ENCODE measurements at regions of chr2 and their contacts with region 1.

Region 1: DNA sequence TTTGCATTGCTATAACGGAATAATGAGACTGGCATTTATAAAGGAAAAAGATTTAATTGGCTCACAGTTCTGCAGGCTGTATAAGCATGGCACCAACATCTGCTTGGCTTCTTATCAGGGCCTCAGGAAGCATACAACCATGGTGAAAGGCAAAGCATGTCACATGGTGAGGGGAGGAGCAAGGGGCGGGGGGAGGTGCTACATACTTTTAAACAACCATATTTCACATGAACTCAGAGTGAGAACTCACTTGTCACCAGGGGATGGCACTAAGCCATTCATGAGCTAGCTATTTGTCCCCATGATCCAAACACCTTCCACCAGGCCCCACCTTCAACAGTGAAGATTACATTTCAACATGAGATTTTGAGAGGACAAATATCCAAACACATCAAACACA is 188.7 kb downstream of the MBD5 start:
- DNase-seq: no peak
- H3K4me3 ChIP-seq: no peak overlapping the region
- H3K27me3 ChIP-seq: no peaks in the 10 kb centered on the region
- CTCF ChIP-seq: no peak

Region 2: DNA sequence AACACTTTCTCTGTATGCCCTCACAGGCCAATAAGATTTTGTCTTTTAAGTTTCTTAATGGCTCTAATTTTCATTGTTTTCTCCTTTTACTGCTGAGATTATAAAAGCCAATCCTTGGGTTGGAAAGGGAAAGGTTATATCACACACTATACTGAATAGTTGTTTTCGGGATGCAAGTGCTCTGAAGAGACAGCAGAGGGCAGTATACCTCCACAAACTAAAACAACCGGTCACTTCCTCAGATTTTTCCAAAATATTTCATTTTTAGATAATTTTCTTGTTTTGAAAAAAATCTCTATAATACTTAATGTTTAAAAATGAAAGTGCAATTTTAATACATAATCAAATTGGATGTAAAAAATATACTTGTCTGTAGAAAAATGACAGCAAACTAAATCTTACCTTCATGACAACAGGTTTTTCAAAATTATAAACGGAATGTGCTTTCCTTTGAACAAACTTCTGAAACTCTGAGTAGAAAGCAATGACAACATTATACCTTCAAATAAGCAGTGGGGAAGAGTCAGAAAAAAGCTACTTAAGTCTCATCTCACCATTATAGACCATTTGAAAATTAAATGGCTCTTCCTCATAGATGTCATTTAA is 271.8 kb before region 1 on chr2:
- CTCF ChIA-PET with region 1: no interaction called
- POLR2A ChIA-PET with region 1: no interaction called
- DNase-seq: no peak
- H3K4me3 ChIP-seq: no peak overlapping the region
- H3K27me3 ChIP-seq: no peaks in the 10 kb centered on the region
- CTCF ChIP-seq: peak; percentile 82

Region 3: DNA sequence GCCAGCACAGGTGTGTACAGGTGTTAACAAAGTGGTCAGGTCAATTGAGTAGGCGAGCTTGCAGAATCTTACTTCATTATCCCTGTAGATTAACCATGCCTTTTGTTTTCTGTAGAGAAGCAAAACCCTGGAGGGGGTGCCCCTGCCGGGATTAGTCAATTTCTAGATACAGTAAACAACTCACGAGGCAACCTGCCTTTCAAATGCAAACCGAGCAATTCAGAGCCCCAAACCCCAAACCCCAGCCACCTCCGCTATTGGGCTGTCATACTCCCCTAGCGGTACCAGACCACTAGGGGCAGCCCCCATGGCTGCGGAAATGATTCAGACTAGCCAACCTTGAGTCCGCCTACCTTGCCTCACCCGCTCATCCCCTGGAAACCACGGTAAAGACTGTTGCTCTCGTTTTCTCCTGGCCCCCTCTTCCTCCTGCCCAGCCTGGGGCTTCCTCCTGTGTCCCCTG is 604.0 kb after region 1 on chr2:
- CTCF ChIA-PET with region 1: no interaction called
- POLR2A ChIA-PET with region 1: interaction called, 12 read pairs
- DNase-seq: no peak
- H3K4me3 ChIP-seq: no peak overlapping the region
- H3K27me3 ChIP-seq: no peaks in the 10 kb centered on the region; the same call in 1 of the 2 replicates
- CTCF ChIP-seq: no peak